ENCODE measurements at regions of chr11 and their contacts with region 1.

Region 1: DNA sequence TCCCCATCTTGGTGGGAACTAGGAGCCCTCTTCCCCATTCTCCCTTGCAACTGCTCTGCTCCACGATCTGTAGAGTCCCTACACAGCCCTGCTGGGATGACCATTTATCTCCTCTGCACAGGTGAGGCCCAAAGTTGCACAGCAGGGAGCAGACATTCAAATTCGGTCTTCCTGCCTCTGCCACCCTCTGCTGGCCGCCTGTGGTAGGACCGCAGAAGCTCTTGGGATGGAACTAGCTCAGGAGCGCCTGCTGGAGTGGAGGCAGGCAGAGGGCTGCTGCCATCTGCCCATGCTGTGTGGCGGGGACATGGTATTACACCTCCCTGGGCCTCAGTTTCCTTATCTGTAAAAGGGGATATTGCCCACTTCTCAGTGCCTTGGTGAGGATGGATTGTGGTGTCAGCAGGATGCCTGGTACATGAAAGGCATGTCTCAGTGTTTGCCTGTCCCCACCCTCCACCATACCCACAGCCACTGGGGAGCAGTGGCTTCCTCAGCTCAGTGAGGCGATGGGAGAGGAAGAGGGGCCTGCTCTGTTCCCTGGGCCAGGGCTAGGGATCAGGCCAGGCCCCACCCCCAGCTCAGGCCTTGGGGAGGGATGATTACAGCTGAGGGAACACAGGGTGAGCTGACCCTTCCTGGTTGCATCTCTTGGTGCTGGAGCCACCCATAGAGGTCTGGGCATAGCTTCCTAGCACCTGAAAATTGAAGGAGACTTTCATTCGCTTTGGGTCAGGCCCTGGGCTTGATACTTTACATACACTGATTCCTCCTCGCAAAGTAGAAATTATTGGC is 11.3 kb upstream of the OMP start:
- DNase-seq: peak; percentile 65 to 79 (median 74)
- H3K4me3 ChIP-seq: no peak overlapping the region
- H3K4me3 Mint-ChIP-seq: peak overlapping the region in 1 of 8 donors; percentile 18
- H3K27ac ChIP-seq: no peak overlapping the region
- H3K27ac Mint-ChIP-seq: peak overlapping the region in 2 of 7 donors; percentile 36 to 67
- H3K4me1 ChIP-seq: peaks cover 6% of the 10 kb centered on the region
- H3K4me1 Mint-ChIP-seq: peaks cover 1 to 7% (median 5%) of the 10 kb centered on the region in 4 donors
- H3K27me3 ChIP-seq: no peaks in the 10 kb centered on the region
- H3K27me3 Mint-ChIP-seq: no peaks in the 10 kb centered on the region

Region 2: GRCh38 chr11:76919887-76920746 is 171.2 kb before region 1 on chr11:
- CTCF ChIA-PET with region 1: interaction called, 30 read pairs
- POLR2A ChIA-PET with region 1: no interaction called
- intact Hi-C with region 1: no loop called
- DNase-seq: peak; percentile 66 to 73 (median 69)
- H3K4me3 ChIP-seq: peak overlapping the region in 1 of 2 donors; percentile 29
- H3K4me3 Mint-ChIP-seq: peak overlapping the region; percentile 66 to 80 (median 74)
- H3K27ac ChIP-seq: no peak overlapping the region
- H3K27ac Mint-ChIP-seq: no peak overlapping the region
- H3K4me1 ChIP-seq: peaks cover 10% of the 10 kb centered on the region
- H3K4me1 Mint-ChIP-seq: peaks cover 3 to 12% (median 7%) of the 10 kb centered on the region in 4 donors
- H3K27me3 ChIP-seq: no peaks in the 10 kb centered on the region
- H3K27me3 Mint-ChIP-seq: no peaks in the 10 kb centered on the region

Region 3: DNA sequence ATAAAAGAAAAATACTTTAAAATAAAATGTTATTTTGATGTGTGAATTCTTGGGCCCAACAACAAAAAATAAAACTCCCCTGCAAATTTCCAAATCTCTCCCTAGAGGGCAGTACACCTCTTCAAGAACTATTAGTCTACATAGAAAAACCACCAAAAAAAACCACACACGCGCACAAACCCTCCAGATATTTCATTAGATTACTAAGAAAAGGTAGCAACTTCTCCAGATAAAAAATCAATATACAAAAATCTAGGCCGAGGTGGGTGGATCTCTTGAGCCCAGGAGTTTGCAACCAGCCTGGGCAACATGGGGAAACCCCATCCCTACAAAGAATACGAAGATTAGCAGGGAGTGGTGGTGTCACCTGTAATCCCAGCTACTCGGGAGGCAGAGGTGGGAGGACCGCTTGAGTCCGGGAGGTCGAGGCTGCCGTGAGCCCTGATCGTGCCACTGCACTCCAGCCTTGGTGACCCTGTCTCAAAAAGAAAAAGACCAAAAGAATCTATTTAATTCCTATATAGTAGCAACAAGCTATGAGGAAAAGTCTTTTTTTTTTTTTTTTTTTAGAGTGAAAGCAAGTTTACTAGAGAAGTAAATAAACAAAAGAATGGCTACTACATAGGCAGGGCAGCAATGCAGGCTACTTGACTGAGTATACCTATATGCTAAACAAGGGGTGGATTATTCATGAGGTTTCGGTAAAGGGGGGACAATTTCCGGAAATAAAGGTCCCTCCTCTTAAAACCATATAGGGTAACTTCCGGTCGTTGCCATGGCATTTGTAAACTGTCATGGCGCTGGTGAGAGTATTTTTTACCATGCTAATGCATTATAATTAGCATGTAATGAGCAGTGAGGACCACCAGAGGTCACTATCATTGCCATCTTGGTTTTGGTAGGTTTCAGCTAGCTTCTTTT is 44.1 kb before region 1 on chr11:
- CTCF ChIA-PET with region 1: interaction called, 107 read pairs
- POLR2A ChIA-PET with region 1: interaction called, 18 read pairs
- intact Hi-C with region 1: loop called (anchors 1 kb)
- DNase-seq: peak; percentile 90 to 94 (median 93)
- H3K4me3 ChIP-seq: peak overlapping the region; percentile 33 to 59
- H3K4me3 Mint-ChIP-seq: peak overlapping the region; percentile 67 to 83 (median 72)
- H3K27ac ChIP-seq: peak overlapping the region; percentile 61
- H3K27ac Mint-ChIP-seq: peak overlapping the region; percentile 24 to 92 (median 60)
- H3K4me1 ChIP-seq: peaks cover 16% of the 10 kb centered on the region
- H3K4me1 Mint-ChIP-seq: peaks cover 5 to 11% (median 6%) of the 10 kb centered on the region in 4 donors
- H3K27me3 ChIP-seq: no peaks in the 10 kb centered on the region
- H3K27me3 Mint-ChIP-seq: peaks cover 2 to 3% of the 10 kb centered on the region in 2 donors

Region 4: DNA sequence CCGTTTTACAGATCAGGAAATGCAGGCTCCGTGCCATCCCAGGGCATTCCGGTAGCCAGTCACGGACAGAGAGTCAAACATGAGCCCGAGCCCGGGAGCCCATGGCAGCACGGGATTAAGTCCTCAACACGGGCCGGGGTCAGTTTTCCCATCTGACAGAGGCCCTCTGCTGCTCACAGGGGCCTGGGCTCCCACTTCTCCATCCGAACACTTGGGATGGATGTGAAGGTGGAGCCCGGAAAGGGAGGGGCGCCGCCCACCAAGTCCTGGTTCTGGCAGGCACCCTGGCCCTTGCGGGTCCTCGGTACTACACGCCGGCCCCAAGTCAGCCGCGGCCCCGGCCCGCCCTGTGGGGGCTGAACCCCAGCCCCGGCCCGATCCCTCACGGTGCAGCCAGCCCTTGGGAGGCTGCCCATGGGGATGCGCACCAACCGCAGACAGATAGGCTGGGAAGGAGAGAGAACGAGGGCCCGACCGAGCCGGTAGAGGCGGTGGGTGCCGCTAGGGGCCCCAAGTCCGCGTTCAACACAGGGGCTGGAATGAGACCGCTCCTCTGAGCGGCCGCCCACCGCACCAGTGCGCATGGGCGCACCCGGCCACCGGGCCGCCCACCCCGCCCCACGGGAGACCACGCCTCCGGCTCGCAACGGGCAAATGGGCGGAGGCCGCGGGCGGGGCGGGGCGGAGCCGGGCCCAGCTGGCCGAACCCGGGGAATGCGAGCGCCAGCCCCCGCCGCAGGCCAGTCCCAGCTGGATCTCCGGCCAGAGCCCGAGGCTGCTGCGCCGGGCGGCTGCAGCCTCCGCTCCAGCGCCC is 24.9 kb before region 1 on chr11 and contains the start of gene CAPN5:
- CTCF ChIA-PET with region 1: interaction called, 30 read pairs
- POLR2A ChIA-PET with region 1: no interaction called
- intact Hi-C with region 1: no loop called
- DNase-seq: peak; percentile 80 to 87 (median 86)
- H3K4me3 ChIP-seq: peak within 1 kb of the TSS; percentile 73 to 80
- H3K4me3 Mint-ChIP-seq: peak within 1 kb of the TSS; percentile 82 to 92 (median 86)
- H3K27ac ChIP-seq: peak within 1 kb of the TSS; percentile 48
- H3K27ac Mint-ChIP-seq: peak within 1 kb of the TSS; percentile 2 to 87 (median 63)
- H3K4me1 ChIP-seq: peaks cover 18% of the 10 kb centered on the region
- H3K4me1 Mint-ChIP-seq: peaks cover 4 to 16% (median 11%) of the 10 kb centered on the region in 4 donors
- H3K27me3 ChIP-seq: no peaks in the 10 kb centered on the region
- H3K27me3 Mint-ChIP-seq: no peaks in the 10 kb centered on the region
- total RNA-seq, gene CAPN5: 1.6 to 1.9 TPM